HAP-1 (cell line): ENCODE measurements at regions of chr19 and their contacts with region 1.

Region 1: GRCh38 chr19:42401365-42402303 is 11.5 kb upstream of the CNFN start:
- DNase-seq: peak; percentile 60 to 90
- H3K4me3 ChIP-seq: no peak overlapping the region
- H3K4me1 ChIP-seq: peaks cover 3% of the 10 kb centered on the region; the same call in 1 of the 2 replicates
- H3K27me3 ChIP-seq: no peaks in the 10 kb centered on the region

Region 2: DNA sequence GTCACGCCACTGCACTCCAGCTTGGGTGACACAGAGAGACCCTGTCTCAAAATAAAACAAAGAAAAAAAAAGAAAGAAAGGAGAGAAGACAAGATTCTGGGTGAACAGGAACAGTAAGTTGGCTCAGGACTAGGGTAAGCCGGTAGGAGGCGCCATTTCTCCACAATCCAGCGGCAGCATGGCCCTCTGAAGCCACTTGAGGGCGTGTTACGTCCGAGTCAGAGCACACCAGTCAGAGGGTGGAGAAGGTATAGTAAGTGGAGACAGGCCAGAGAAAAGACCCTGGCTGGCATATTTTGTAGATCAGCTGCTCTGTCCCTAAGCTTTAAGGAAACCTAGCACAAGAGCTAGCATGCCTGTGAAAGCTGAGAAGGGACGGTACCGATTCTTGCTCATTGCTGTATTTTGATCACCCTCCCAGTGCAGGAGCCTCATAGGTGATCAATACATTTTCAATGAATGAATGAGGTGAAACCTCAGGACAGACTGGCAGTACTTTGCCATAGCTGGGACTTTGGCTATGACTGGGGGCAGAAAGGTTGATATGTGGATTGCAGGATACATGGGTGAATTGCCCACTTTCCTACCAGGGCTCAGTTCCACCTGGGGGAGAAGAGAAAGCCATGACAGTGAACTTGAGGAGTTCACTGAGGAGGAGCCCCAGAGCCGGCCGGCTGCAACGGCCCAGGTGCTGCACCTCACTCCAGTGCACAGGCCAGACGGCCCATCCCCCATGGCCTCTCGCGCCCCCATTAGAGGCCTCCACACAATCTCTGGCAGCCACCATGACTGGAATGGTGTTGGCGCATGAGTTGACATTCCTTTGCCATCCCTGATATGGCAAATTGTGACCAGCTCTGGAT is 292.9 kb before region 1 on chr19:
- in situ Hi-C with region 1: loop called (anchors 10 kb)
- DNase-seq: peak; percentile 80 to 91
- H3K4me3 ChIP-seq: no peak overlapping the region
- H3K4me1 ChIP-seq: no peaks in the 10 kb centered on the region
- H3K27me3 ChIP-seq: peaks cover 18% of the 10 kb centered on the region

Region 3: GRCh38 chr19:42184401-42184861 is 217.2 kb before region 1 on chr19:
- in situ Hi-C with region 1: no loop called
- DNase-seq: peak; percentile 63 to 88
- H3K4me3 ChIP-seq: no peak overlapping the region
- H3K4me1 ChIP-seq: no peaks in the 10 kb centered on the region
- H3K27me3 ChIP-seq: peaks cover 20% of the 10 kb centered on the region